Activated CD4-positive, alpha-beta memory T cell treated with anti-CD3 and anti-CD28 coated beads for 36 hours (primary cell): ENCODE measurements at regions of chr1 and their contacts with region 1.

Region 1: DNA sequence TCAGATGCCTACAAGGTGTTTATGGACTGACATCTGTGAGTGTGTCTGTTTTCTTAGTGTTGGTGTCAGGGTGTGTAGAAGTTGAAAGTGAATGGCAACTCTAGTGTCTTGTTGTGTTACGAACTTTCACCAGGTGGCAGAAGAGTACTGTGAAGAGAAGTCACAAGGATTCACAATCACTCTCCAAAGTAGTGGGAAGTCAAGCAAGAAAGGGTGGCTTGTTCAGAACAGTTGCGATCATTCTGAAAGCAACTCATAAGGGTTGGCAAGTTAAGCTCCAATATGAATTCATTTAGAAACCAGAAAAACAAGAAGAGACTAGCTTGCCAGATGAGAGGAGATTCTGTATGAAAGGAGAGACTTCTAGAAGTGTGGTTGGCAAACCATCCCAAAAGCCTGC is 86.1 kb downstream of the FASLG start:
- DNase-seq: peak; percentile 26
- H3K4me3 Mint-ChIP-seq: no peak overlapping the region
- H3K27ac Mint-ChIP-seq: peak overlapping the region; percentile 4
- H3K4me1 Mint-ChIP-seq: peaks cover 29% of the 10 kb centered on the region
- H3K27me3 Mint-ChIP-seq: peaks cover 9% of the 10 kb centered on the region

Region 2: GRCh38 chr1:172761581-172762025 is 16.6 kb after region 1 on chr1:
- CTCF ChIA-PET with region 1: interaction called, 13 read pairs
- POLR2A ChIA-PET with region 1: interaction called, 3 read pairs
- intact Hi-C with region 1: no loop called
- DNase-seq: no peak
- H3K4me3 Mint-ChIP-seq: no peak overlapping the region
- H3K27ac Mint-ChIP-seq: no peak overlapping the region
- H3K4me1 Mint-ChIP-seq: peaks cover 31% of the 10 kb centered on the region
- H3K27me3 Mint-ChIP-seq: peaks cover 17% of the 10 kb centered on the region

Region 3: GRCh38 chr1:172826096-172826743 is 81.2 kb after region 1 on chr1:
- CTCF ChIA-PET with region 1: interaction called, 22 read pairs
- POLR2A ChIA-PET with region 1: no interaction called
- intact Hi-C with region 1: loop called (anchors 2 kb)
- DNase-seq: no peak
- H3K4me3 Mint-ChIP-seq: no peak overlapping the region
- H3K27ac Mint-ChIP-seq: no peak overlapping the region
- H3K4me1 Mint-ChIP-seq: no peaks in the 10 kb centered on the region
- H3K27me3 Mint-ChIP-seq: peaks cover 6% of the 10 kb centered on the region

Region 4: DNA sequence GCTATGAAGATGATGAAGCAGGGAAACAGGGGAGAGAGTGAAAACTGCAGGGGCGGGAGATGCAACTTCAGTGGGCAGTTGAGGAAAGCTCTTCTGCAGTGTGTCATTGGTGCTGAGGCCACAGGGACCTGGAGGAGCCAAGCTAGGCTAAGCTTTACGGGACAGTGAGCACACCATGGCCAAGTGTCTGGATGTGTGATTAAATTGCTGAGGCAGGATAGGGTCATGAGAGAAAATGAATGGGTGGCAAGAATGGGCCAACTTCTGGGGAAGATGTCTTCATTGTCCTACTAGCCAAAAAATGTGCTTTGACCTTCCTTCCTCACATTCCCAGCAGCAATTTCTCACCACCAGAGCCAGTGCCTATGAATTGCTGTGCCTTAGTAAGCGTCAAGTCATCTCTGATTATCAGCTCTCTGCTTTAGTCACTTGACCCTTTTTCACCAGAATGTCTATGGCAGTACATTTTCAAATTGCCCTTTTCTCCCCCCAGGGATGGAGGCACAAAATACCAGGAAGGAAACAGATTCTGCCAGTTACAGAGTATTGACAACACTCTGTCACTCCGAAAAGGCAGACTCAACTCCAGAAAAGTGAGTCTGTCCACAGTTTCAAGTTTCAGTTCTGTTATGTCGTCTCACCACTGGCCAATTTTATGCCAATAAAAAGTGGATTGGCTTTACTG is 138.2 kb after region 1 on chr1:
- CTCF ChIA-PET with region 1: interaction called, 10 read pairs
- POLR2A ChIA-PET with region 1: no interaction called
- intact Hi-C with region 1: no loop called
- DNase-seq: peak; percentile 48
- H3K4me3 Mint-ChIP-seq: no peak overlapping the region
- H3K27ac Mint-ChIP-seq: no peak overlapping the region
- H3K4me1 Mint-ChIP-seq: peaks cover 15% of the 10 kb centered on the region
- H3K27me3 Mint-ChIP-seq: peaks cover 33% of the 10 kb centered on the region

Region 5: GRCh38 chr1:173038875-173039554 is 294.0 kb after region 1 on chr1:
- CTCF ChIA-PET with region 1: interaction called, 10 read pairs
- POLR2A ChIA-PET with region 1: no interaction called
- intact Hi-C with region 1: no loop called
- DNase-seq: peak; percentile 25
- H3K4me3 Mint-ChIP-seq: no peak overlapping the region
- H3K27ac Mint-ChIP-seq: no peak overlapping the region
- H3K4me1 Mint-ChIP-seq: peaks cover 11% of the 10 kb centered on the region
- H3K27me3 Mint-ChIP-seq: no peaks in the 10 kb centered on the region

Region 6: DNA sequence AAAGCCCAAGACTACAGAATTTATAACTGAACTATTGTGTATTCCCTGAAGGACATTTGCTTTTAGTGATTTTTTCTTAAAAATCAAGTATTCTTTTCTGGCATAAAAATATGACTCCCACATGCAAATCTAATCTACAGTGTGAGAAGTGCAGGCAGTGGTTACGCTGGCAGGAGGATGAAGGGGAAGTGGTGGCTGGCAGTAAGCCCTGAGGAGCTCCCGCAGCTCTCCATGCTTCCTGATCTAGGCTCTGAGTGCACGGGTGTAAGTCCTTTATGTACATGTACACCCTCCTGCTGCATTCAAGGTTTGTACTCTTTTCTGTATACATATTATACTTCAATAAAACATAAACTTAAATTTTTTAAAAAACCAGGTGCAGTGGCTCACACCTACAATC is 664.6 kb after region 1 on chr1:
- CTCF ChIA-PET with region 1: interaction called, 10 read pairs
- POLR2A ChIA-PET with region 1: no interaction called
- intact Hi-C with region 1: loop called (anchors 5 kb)
- DNase-seq: peak; percentile 23
- H3K4me3 Mint-ChIP-seq: no peak overlapping the region
- H3K27ac Mint-ChIP-seq: no peak overlapping the region
- H3K4me1 Mint-ChIP-seq: peaks cover 26% of the 10 kb centered on the region
- H3K27me3 Mint-ChIP-seq: no peaks in the 10 kb centered on the region

Region 7: DNA sequence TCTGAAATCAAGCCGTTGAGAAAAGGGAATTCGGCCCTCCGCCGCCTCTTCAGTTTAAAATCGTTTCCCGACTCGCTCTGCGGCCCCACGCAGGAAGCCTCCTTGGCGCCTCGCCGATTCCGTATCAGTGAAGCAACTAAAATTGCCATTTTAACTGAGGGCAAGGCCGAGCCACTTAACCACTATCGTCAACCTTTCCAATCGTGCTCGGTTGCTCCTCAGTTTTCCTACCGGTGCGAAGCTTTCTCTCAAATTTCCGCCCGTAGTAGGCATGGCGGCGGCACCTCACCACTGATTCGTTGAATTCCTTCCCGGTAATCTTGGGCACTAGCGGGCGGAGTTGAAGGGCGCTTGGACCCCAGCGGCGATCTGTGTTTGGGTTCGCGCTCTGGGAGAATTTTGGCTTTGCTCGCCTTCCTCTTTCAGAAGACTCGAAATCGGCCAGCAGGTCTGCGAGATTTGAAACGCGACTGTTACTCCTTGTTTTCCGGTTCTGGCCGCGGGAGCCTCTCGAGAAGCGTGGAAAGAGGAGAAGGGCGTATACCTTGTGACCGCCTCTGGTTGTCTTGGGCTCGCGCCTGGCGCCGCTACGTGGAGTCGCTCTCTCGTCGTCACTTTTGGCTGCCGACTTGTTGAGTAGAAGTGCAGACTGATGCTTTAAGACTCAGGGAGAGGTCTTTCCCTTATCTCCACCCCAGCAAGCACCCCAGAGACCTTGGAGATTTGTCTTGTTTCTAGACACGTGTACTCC is 1079.5 kb after region 1 on chr1 and contains the starts of genes CENPL and DARS2:
- CTCF ChIA-PET with region 1: interaction called, 6 read pairs
- POLR2A ChIA-PET with region 1: no interaction called
- intact Hi-C with region 1: loop called (anchors 2 kb)
- DNase-seq: peak; percentile 95
- H3K4me3 Mint-ChIP-seq: peak within 1 kb of the TSS; percentile 98
- H3K27ac Mint-ChIP-seq: peak within 1 kb of the TSS; percentile 99
- H3K4me1 Mint-ChIP-seq: peaks cover 45% of the 10 kb centered on the region
- H3K27me3 Mint-ChIP-seq: no peaks in the 10 kb centered on the region
- total RNA-seq, gene CENPL: 24.5 to 26.3 TPM
- total RNA-seq, gene DARS2: 43.1 to 43.6 TPM